HepG2 (cell line): ENCODE measurements at regions of chr7 and their contacts with region 1.

Region 1: GRCh38 chr7:72493850-72494661 is 81.9 kb upstream of the CALN1 start:
- DNase-seq: peak; percentile 35
- ATAC-seq: peak; percentile 75
- H3K4me3 ChIP-seq: no peak overlapping the region
- H3K27ac ChIP-seq: no peak overlapping the region
- H3K4me1 ChIP-seq: no peaks in the 10 kb centered on the region
- H3K27me3 ChIP-seq: peaks cover 0 to 4% of the 10 kb centered on the region in 2 experiments; a peak in 1 of 5 replicates
- CTCF ChIP-seq: peak; percentile 80
- EP300 ChIP-seq: no peak
- POLR2A ChIP-seq: no peak
- RAD21 ChIP-seq: 0 out of 2 replicates have a peak, but pooled peaks have one; percentile 33

Region 2: GRCh38 chr7:71229148-71229547 is 1264.9 kb before region 1 on chr7:
- CTCF ChIA-PET with region 1: no interaction called
- POLR2A ChIA-PET with region 1: no interaction called
- in situ Hi-C with region 1: no loop called
- intact Hi-C with region 1: no loop called
- DNase-seq: no peak
- ATAC-seq: no peak
- H3K4me3 ChIP-seq: no peak overlapping the region
- H3K27ac ChIP-seq: no peak overlapping the region
- H3K4me1 ChIP-seq: no peaks in the 10 kb centered on the region
- H3K27me3 ChIP-seq: 0 out of 5 replicates have a peak, but pooled peaks cover 0 to 2% of the 10 kb centered on the region in 2 experiments
- CTCF ChIP-seq: no peak
- EP300 ChIP-seq: no peak
- POLR2A ChIP-seq: no peak
- RAD21 ChIP-seq: no peak

Region 3: GRCh38 chr7:71752171-71752935 is 741.7 kb before region 1 on chr7:
- CTCF ChIA-PET with region 1: interaction called, 4 read pairs
- POLR2A ChIA-PET with region 1: no interaction called
- in situ Hi-C with region 1: no loop called
- intact Hi-C with region 1: loop called (anchors 2 kb)
- DNase-seq: peak; percentile 4
- ATAC-seq: peak; percentile 99
- H3K4me3 ChIP-seq: peak overlapping the region in 1 of 3 experiments; percentile 48; a peak in 1 of 6 replicates
- H3K27ac ChIP-seq: no peak overlapping the region
- H3K4me1 ChIP-seq: no peaks in the 10 kb centered on the region
- H3K27me3 ChIP-seq: no peaks in the 10 kb centered on the region; a peak in 1 of 5 replicates
- CTCF ChIP-seq: peak; percentile 89
- EP300 ChIP-seq: no peak
- POLR2A ChIP-seq: no peak
- RAD21 ChIP-seq: peak; percentile 83

Region 4: GRCh38 chr7:71925663-71926062 is 568.4 kb before region 1 on chr7:
- CTCF ChIA-PET with region 1: no interaction called
- POLR2A ChIA-PET with region 1: no interaction called
- in situ Hi-C with region 1: no loop called
- intact Hi-C with region 1: loop called (anchors 2 kb)
- DNase-seq: peak; percentile 40
- ATAC-seq: no peak; the same call in 2 of the 3 replicates
- H3K4me3 ChIP-seq: no peak overlapping the region
- H3K27ac ChIP-seq: no peak overlapping the region
- H3K4me1 ChIP-seq: no peaks in the 10 kb centered on the region
- H3K27me3 ChIP-seq: no peaks in the 10 kb centered on the region
- CTCF ChIP-seq: peak; percentile 68
- EP300 ChIP-seq: no peak
- POLR2A ChIP-seq: no peak
- RAD21 ChIP-seq: no peak

Region 5: DNA sequence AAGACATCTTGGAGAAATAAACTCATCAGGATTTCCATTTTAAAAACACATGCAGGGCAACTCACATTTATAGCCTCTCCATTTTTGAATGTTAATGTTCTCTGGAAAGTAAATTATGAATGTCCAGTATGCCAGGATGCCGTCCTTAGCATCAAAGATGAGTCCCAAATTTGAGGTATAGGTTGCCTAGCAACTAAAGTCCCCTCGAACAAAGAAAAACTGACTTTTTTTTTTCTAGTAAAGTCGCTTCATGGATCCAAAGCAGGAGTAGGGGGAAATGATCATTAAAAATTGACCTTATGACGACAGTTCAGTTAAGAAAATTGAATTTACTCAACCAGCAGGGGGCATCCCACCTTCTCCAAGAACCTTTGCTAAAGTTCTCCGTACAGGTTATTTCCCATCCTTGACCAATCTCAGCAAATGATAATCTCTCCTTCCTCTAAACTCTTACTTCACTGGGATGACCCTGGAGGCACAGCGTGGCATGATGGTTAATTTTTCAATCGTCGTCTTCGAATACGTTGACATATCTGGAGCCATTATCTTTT is 310.3 kb before region 1 on chr7:
- CTCF ChIA-PET with region 1: interaction called, 3 read pairs
- POLR2A ChIA-PET with region 1: no interaction called
- in situ Hi-C with region 1: no loop called
- intact Hi-C with region 1: loop called (anchors 5 kb)
- DNase-seq: peak; percentile 6
- ATAC-seq: no peak
- H3K4me3 ChIP-seq: no peak overlapping the region
- H3K27ac ChIP-seq: no peak overlapping the region
- H3K4me1 ChIP-seq: no peaks in the 10 kb centered on the region
- H3K27me3 ChIP-seq: no peaks in the 10 kb centered on the region
- CTCF ChIP-seq: no peak
- EP300 ChIP-seq: no peak
- POLR2A ChIP-seq: no peak
- RAD21 ChIP-seq: no peak

Region 6: GRCh38 chr7:72481934-72482333 is 12.1 kb before region 1 on chr7:
- CTCF ChIA-PET with region 1: no interaction called
- POLR2A ChIA-PET with region 1: no interaction called
- in situ Hi-C with region 1: no loop called
- intact Hi-C with region 1: no loop called
- DNase-seq: no peak
- ATAC-seq: no peak
- H3K4me3 ChIP-seq: no peak overlapping the region
- H3K27ac ChIP-seq: no peak overlapping the region
- H3K4me1 ChIP-seq: no peaks in the 10 kb centered on the region
- H3K27me3 ChIP-seq: 0 out of 5 replicates have a peak, but pooled peaks cover 0 to 3% of the 10 kb centered on the region in 2 experiments
- CTCF ChIP-seq: no peak
- EP300 ChIP-seq: no peak
- POLR2A ChIP-seq: no peak
- RAD21 ChIP-seq: no peak